ENCODE measurements at regions of chr1 and their contacts with region 1.

Region 1: GRCh38 chr1:173779936-173780335 is 44.5 kb upstream of the DARS2 start:
- DNase-seq: no peak
- ATAC-seq: no peak
- H3K4me3 ChIP-seq: no peak overlapping the region
- H3K27ac ChIP-seq: no peak overlapping the region
- H3K4me1 ChIP-seq: no peaks in the 10 kb centered on the region
- H3K27me3 ChIP-seq: no peaks in the 10 kb centered on the region
- CTCF ChIP-seq: no peak

Region 2: GRCh38 chr1:173818459-173818858 is 38.5 kb after region 1 on chr1:
- intact Hi-C with region 1: loop called in 1 of 2 experiments (anchors 5 kb)
- DNase-seq: no peak
- ATAC-seq: no peak
- H3K4me3 ChIP-seq: no peak overlapping the region
- H3K27ac ChIP-seq: no peak overlapping the region
- H3K4me1 ChIP-seq: peaks cover 2% of the 10 kb centered on the region
- H3K27me3 ChIP-seq: no peaks in the 10 kb centered on the region
- CTCF ChIP-seq: no peak

Measured in psoas muscle (tissue), 8 donors.